AG04450 (cell line): ENCODE measurements at regions of chr3 and their contacts with region 1.

Region 1: GRCh38 chr3:115120597-115120996 is 26.5 kb downstream of the ZBTB20 start:
- DNase-seq: no peak
- H3K4me3 ChIP-seq: no peak overlapping the region
- H3K27ac ChIP-seq: no peak overlapping the region
- H3K27me3 ChIP-seq: no peaks in the 10 kb centered on the region
- CTCF ChIP-seq: no peak

Region 2: GRCh38 chr3:113758389-113759024 is 1362.1 kb before region 1 on chr3:
- CTCF ChIA-PET with region 1: no interaction called
- POLR2A ChIA-PET with region 1: interaction called, 12 read pairs
- DNase-seq: no peak
- H3K4me3 ChIP-seq: no peak overlapping the region
- H3K27ac ChIP-seq: no peak overlapping the region
- H3K27me3 ChIP-seq: no peaks in the 10 kb centered on the region
- CTCF ChIP-seq: no peak

Region 3: GRCh38 chr3:115108614-115109013 is 12.0 kb before region 1 on chr3:
- CTCF ChIA-PET with region 1: no interaction called
- POLR2A ChIA-PET with region 1: no interaction called
- DNase-seq: no peak
- H3K4me3 ChIP-seq: no peak overlapping the region
- H3K27ac ChIP-seq: no peak overlapping the region
- H3K27me3 ChIP-seq: no peaks in the 10 kb centered on the region
- CTCF ChIP-seq: no peak